ENCODE measurements at regions of chr11 and their contacts with region 1.

Region 1: GRCh38 chr11:34357701-34358257 is at the start of gene ABTB2:
- DNase-seq: peak; percentile 90 to 97 (median 97)
- ATAC-seq: peak; percentile 96
- H3K4me3 ChIP-seq: peak within 1 kb of the TSS; percentile 67
- H3K4me3 Mint-ChIP-seq: peak within 1 kb of the TSS; percentile 81 to 96 (median 88)
- H3K27ac ChIP-seq: peak within 1 kb of the TSS; percentile 55
- H3K27ac Mint-ChIP-seq: peak within 1 kb of the TSS; percentile 28 to 94 (median 90)
- H3K4me1 ChIP-seq: peaks cover 8 to 10% of the 10 kb centered on the region in 2 donors
- H3K4me1 Mint-ChIP-seq: peaks cover 8 to 28% (median 21%) of the 10 kb centered on the region in 7 donors
- H3K27me3 ChIP-seq: peaks cover 7 to 13% of the 10 kb centered on the region in 2 donors
- H3K27me3 Mint-ChIP-seq: peaks cover 26 to 59% (median 36%) of the 10 kb centered on the region in 5 donors
- total RNA-seq, gene ABTB2: 0.22 to 5.3 (median 0.61) TPM

Region 2: DNA sequence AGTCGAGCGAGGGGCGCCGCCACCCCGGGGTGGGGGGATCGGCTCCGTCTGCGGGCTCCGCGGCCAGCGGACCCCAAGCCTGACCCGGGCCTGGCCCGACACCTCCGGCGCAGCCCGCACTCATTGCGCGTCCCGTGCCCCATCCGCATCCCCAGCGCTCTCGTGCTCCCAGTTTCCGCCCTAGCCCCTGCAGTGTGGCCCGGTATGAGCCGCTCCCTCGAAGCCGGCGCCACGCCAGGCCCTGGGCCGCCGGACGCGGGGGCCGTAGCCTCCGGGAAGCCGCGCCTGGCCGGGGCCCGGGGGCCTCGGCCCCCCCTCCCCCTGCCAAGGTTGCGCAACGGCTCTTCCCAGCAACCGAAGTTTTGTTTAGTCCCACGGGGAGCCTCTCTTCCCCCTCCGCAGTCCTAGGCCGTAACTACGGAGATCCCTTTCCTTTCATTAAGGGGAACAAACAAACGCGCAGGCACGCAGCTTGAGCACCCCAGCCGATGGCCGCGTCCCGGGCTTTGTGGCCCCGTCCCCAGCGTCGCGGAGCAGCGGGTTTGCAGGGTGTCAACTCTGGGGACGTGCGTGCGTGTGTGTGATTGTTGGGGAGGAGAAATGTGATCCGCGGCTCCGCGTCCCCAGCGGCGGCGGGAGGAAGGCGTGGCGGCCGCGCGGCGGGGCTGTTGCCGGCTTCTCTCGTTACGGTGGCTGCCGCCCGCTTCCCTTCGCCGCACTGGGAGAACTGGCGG is 1099.7 kb before region 1 on chr11:
- CTCF ChIA-PET with region 1: no interaction called
- POLR2A ChIA-PET with region 1: no interaction called
- intact Hi-C with region 1: loop called (anchors 1 to 2 kb)
- DNase-seq: peak; percentile 67 to 83 (median 76)
- ATAC-seq: peak; percentile 71
- H3K4me3 ChIP-seq: peak overlapping the region; percentile 63
- H3K4me3 Mint-ChIP-seq: peak overlapping the region; percentile 89 to 99 (median 96)
- H3K27ac ChIP-seq: peak overlapping the region; percentile 97
- H3K27ac Mint-ChIP-seq: peak overlapping the region; percentile 93 to 99 (median 98)
- H3K4me1 ChIP-seq: peaks cover 27 to 28% of the 10 kb centered on the region in 2 donors
- H3K4me1 Mint-ChIP-seq: peaks cover 25 to 55% (median 44%) of the 10 kb centered on the region in 7 donors
- H3K27me3 ChIP-seq: no peaks in the 10 kb centered on the region
- H3K27me3 Mint-ChIP-seq: peaks cover 0 to 2% (median 0%) of the 10 kb centered on the region in 5 donors

Region 3: DNA sequence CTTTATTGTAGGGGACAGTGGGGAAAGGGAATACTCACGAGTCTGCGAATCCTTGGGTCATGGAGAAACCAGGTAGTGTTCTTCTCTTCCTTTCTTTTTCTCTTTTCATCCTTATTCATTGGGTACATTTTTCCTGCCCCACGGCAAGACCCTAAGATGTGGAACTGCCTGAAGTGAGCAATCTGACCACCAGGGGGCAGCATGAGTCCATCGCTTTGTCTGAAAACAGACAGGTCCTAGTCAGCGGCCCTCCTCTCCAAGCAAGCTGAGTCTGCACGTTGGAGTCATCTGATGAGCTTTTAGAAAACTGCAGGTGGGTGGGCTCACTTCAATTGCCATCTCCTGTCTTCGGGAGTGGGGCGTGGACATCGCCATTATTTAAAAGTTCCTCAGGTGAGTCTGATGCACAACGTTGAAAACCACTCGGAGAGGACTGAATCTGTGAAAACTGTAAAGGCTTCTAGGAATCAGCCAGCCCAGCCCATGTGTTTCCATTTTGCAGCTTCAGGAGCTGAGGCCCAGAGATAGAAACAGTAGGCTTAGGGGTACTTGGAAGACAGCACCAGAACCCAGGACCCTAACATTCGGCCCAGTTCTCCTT is 549.5 kb before region 1 on chr11:
- CTCF ChIA-PET with region 1: interaction called, 3 read pairs
- POLR2A ChIA-PET with region 1: no interaction called
- intact Hi-C with region 1: loop called (anchors 1 kb)
- DNase-seq: peak; percentile 60 to 85 (median 69)
- ATAC-seq: peak; percentile 94
- H3K4me3 ChIP-seq: no peak overlapping the region
- H3K4me3 Mint-ChIP-seq: no peak overlapping the region
- H3K27ac ChIP-seq: no peak overlapping the region
- H3K27ac Mint-ChIP-seq: no peak overlapping the region
- H3K4me1 ChIP-seq: no peaks in the 10 kb centered on the region
- H3K4me1 Mint-ChIP-seq: peaks cover 0 to 4% (median 0%) of the 10 kb centered on the region in 7 donors
- H3K27me3 ChIP-seq: no peaks in the 10 kb centered on the region
- H3K27me3 Mint-ChIP-seq: peaks cover 9 to 39% (median 13%) of the 10 kb centered on the region in 5 donors

Region 4: GRCh38 chr11:34105079-34105956 is 252.5 kb before region 1 on chr11 and contains the start of gene NAT10:
- CTCF ChIA-PET with region 1: no interaction called
- POLR2A ChIA-PET with region 1: interaction called, 3 read pairs
- intact Hi-C with region 1: loop called (anchors 1 kb)
- DNase-seq: peak; percentile 84 to 98 (median 96)
- ATAC-seq: peak; percentile 97
- H3K4me3 ChIP-seq: peak within 1 kb of the TSS; percentile 91
- H3K4me3 Mint-ChIP-seq: peak within 1 kb of the TSS; percentile 89 to 100 (median 97)
- H3K27ac ChIP-seq: peak within 1 kb of the TSS; percentile 83
- H3K27ac Mint-ChIP-seq: peak within 1 kb of the TSS; percentile 97 to 99 (median 99)
- H3K4me1 ChIP-seq: peaks cover 18 to 21% of the 10 kb centered on the region in 2 donors
- H3K4me1 Mint-ChIP-seq: peaks cover 26 to 76% (median 64%) of the 10 kb centered on the region in 7 donors
- H3K27me3 ChIP-seq: no peaks in the 10 kb centered on the region
- H3K27me3 Mint-ChIP-seq: peaks cover 0 to 5% (median 0%) of the 10 kb centered on the region in 5 donors
- total RNA-seq, gene NAT10: 55.7 to 104 (median 84.3) TPM

Region 5: DNA sequence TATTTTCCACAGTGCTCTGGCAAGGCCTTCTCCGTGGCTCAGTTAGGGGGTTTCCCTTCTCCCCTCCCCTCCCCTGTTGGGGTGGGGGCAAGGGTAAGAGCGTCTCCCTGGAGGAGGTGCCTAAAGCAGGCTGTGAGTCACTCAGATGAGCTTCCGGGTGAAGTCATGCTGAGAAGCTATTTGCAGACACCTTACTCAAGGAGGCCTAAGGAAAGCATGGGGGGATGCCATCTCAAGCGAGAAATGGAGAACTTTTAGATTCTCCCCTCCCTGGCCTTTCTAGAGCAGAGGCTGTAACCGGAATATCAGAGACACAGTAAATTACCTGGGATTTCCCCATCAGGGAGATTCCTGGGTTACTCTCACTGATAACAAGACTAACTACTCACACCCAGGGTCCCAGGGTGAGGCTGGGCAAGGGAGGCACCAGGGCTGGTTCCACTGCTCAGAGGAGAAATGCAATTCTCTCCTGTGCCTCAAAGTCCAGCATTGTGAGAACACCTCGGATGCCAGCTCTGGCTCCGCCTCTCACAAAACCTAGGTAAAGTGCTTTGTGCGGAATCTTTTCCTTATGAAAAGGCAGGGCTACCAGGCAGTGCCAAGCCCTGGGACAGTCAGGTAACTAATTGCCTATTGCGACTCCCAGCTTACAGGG is 123.6 kb before region 1 on chr11:
- CTCF ChIA-PET with region 1: no interaction called
- POLR2A ChIA-PET with region 1: interaction called, 4 read pairs
- intact Hi-C with region 1: loop called (anchors 1 kb)
- DNase-seq: peak in 8 of 9 donors; percentile 50 to 89 (median 62)
- ATAC-seq: no peak
- H3K4me3 ChIP-seq: peak overlapping the region; percentile 16
- H3K4me3 Mint-ChIP-seq: peak overlapping the region in 5 of 10 donors; percentile 35 to 69 (median 47)
- H3K27ac ChIP-seq: peak overlapping the region; percentile 39
- H3K27ac Mint-ChIP-seq: peak overlapping the region in 7 of 9 donors; percentile 12 to 74 (median 65)
- H3K4me1 ChIP-seq: peaks cover 8 to 18% of the 10 kb centered on the region in 2 donors
- H3K4me1 Mint-ChIP-seq: peaks cover 0 to 34% (median 13%) of the 10 kb centered on the region in 7 donors
- H3K27me3 ChIP-seq: no peaks in the 10 kb centered on the region
- H3K27me3 Mint-ChIP-seq: peaks cover 0 to 7% (median 0%) of the 10 kb centered on the region in 5 donors

Region 6: DNA sequence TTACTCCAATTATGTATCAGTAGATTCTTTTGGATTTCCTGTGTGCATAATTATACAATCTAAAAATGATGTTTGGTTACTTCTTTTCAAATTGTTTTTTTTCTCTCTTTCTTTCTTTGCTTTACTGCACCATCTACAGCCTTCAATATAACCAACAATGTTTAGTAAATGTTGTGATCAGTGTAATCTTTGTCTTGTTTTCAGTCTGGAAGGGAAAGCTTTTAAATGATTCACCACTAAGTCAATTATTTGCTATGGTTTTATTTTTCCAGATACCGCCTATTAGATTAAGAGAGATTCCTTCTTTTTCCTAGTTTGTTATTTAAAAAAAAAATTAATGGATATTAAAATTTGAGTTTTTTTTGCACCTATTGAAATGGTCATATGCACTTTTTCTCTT is 29.9 kb after region 1 on chr11:
- CTCF ChIA-PET with region 1: no interaction called
- POLR2A ChIA-PET with region 1: no interaction called
- intact Hi-C with region 1: no loop called
- DNase-seq: no peak
- ATAC-seq: no peak
- H3K4me3 ChIP-seq: no peak overlapping the region
- H3K4me3 Mint-ChIP-seq: no peak overlapping the region
- H3K27ac ChIP-seq: no peak overlapping the region
- H3K27ac Mint-ChIP-seq: no peak overlapping the region
- H3K4me1 ChIP-seq: no peaks in the 10 kb centered on the region
- H3K4me1 Mint-ChIP-seq: peaks cover 0 to 5% (median 0%) of the 10 kb centered on the region in 7 donors
- H3K27me3 ChIP-seq: no peaks in the 10 kb centered on the region
- H3K27me3 Mint-ChIP-seq: peaks cover 3 to 41% (median 11%) of the 10 kb centered on the region in 5 donors

Region 7: GRCh38 chr11:34468209-34468841 is 110.5 kb after region 1 on chr11:
- CTCF ChIA-PET with region 1: interaction called, 4 read pairs
- POLR2A ChIA-PET with region 1: no interaction called
- intact Hi-C with region 1: loop called in 1 of 2 experiments (anchors 1 kb)
- DNase-seq: peak in 6 of 9 donors; percentile 9 to 48 (median 32)
- ATAC-seq: peak; percentile 71
- H3K4me3 ChIP-seq: no peak overlapping the region
- H3K4me3 Mint-ChIP-seq: no peak overlapping the region
- H3K27ac ChIP-seq: no peak overlapping the region
- H3K27ac Mint-ChIP-seq: peak overlapping the region in 3 of 9 donors; percentile 1 to 62 (median 46)
- H3K4me1 ChIP-seq: no peaks in the 10 kb centered on the region
- H3K4me1 Mint-ChIP-seq: peaks cover 0 to 11% (median 4%) of the 10 kb centered on the region in 7 donors
- H3K27me3 ChIP-seq: no peaks in the 10 kb centered on the region
- H3K27me3 Mint-ChIP-seq: no peaks in the 10 kb centered on the region

Measured in naive thymus-derived CD4-positive, alpha-beta T cell (primary cell).